Ascending aorta (tissue), 2 donors: ENCODE measurements at regions of chr11 and their contacts with region 1.

Region 1: DNA sequence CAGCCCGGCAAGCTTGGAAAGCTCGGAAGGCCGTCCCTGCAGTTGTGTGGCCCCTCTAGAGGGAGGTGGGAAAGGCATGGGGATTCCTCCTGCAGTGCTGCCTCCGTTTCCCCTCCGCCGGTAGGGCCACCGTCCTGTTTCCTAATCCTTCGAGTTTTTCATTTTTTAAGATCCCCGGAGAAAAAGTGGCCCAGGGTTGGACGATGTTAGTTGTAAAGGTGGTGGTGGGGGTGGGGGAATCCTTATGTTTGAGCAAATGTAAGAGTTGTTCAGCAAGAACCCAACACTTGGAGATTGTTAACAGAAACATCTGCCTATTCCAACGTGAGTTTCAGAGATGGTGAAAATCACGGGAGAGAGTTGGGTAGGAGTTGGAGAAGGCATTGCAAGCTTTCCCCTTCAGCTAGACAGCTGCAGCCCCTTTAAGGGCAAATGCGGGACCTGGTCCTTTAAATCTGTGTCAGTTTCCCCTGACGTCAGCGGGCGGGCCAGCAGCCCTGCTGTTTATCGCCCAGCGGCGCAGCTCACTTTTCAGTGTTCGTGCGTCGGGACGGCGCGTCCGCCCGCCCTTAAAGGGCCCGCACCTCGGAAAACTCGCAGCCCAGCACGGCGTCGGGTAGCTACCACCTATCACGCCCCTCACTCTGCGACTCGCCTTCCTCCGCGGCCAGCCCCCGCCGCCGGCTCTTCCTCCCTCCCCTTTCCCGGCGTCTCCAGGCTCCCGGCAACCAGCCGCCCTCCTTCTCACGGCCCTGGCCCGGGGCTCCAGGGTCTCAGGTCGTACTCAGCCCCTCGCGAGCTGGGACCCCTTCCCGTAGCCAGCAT is at the start of gene SIDT2:
- DNase-seq: peak; percentile 79 to 97
- H3K4me3 ChIP-seq: peak within 1 kb of the TSS; percentile 84 to 97
- H3K27ac ChIP-seq: peak within 1 kb of the TSS; percentile 98 to 99
- H3K4me1 ChIP-seq: peaks cover 14 to 28% of the 10 kb centered on the region in 2 donors
- H3K27me3 ChIP-seq: no peaks in the 10 kb centered on the region
- CTCF ChIP-seq: peak in 1 of 3 experiments; percentile 7
- total RNA-seq, gene SIDT2: 45.4 TPM

Region 2: GRCh38 chr11:116916052-116916451 is 262.4 kb before region 1 on chr11:
- intact Hi-C with region 1: no loop called
- DNase-seq: no peak
- H3K4me3 ChIP-seq: no peak overlapping the region
- H3K27ac ChIP-seq: no peak overlapping the region
- H3K4me1 ChIP-seq: peaks cover 0 to 5% of the 10 kb centered on the region in 2 donors
- H3K27me3 ChIP-seq: no peaks in the 10 kb centered on the region
- CTCF ChIP-seq: no peak

Region 3: GRCh38 chr11:117020287-117020686 is 158.1 kb before region 1 on chr11:
- intact Hi-C with region 1: no loop called
- DNase-seq: no peak
- H3K4me3 ChIP-seq: no peak overlapping the region
- H3K27ac ChIP-seq: no peak overlapping the region
- H3K4me1 ChIP-seq: no peaks in the 10 kb centered on the region
- H3K27me3 ChIP-seq: no peaks in the 10 kb centered on the region
- CTCF ChIP-seq: no peak

Region 4: GRCh38 chr11:117143871-117144476 is 34.4 kb before region 1 on chr11 and contains the start of gene PAFAH1B2:
- intact Hi-C with region 1: loop called (anchors 1 kb)
- DNase-seq: peak; percentile 81 to 97
- H3K4me3 ChIP-seq: peak within 1 kb of the TSS; percentile 92 to 98
- H3K27ac ChIP-seq: peak within 1 kb of the TSS; percentile 91 to 95
- H3K4me1 ChIP-seq: peaks cover 3 to 18% of the 10 kb centered on the region in 2 donors
- H3K27me3 ChIP-seq: no peaks in the 10 kb centered on the region
- CTCF ChIP-seq: no peak
- total RNA-seq, gene PAFAH1B2: 60.7 TPM

Region 5: DNA sequence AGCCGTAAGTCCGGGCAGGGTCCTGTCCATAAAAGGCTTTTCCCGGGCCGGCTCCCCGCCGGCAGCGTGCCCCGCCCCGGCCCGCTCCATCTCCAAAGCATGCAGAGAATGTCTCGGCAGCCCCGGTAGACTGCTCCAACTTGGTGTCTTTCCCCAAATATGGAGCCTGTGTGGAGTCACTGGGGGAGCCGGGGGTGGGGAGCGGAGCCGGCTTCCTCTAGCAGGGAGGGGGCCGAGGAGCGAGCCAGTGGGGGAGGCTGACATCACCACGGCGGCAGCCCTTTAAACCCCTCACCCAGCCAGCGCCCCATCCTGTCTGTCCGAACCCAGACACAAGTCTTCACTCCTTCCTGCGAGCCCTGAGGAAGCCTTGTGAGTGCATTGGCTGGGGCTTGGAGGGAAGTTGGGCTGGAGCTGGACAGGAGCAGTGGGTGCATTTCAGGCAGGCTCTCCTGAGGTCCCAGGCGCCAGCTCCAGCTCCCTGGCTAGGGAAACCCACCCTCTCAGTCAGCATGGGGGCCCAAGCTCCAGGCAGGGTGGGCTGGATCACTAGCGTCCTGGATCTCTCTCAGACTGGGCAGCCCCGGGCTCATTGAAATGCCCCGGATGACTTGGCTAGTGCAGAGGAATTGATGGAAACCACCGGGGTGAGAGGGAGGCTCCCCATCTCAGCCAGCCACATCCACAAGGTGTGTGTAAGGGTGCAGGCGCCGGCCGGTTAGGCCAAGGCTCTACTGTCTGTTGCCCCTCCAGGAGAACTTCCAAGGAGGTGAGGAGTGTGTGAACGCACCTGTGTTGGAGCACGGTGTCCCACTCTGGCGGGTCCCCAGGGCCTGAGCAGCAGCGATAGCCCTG is 20.9 kb after region 1 on chr11 and contains the start of gene TAGLN:
- intact Hi-C with region 1: loop called (anchors 1 kb)
- DNase-seq: peak; percentile 87 to 99
- H3K4me3 ChIP-seq: peak within 1 kb of the TSS; percentile 68 to 97
- H3K27ac ChIP-seq: peak within 1 kb of the TSS; percentile 96 to 98
- H3K4me1 ChIP-seq: peaks cover 7 to 9% of the 10 kb centered on the region in 2 donors
- H3K27me3 ChIP-seq: no peaks in the 10 kb centered on the region
- CTCF ChIP-seq: no peak
- total RNA-seq, gene TAGLN: 6,542 TPM

Region 6: GRCh38 chr11:117226388-117227385 is 48.3 kb after region 1 on chr11:
- intact Hi-C with region 1: loop called (anchors 1 kb)
- DNase-seq: peak in 1 of 2 donors; percentile 71
- H3K4me3 ChIP-seq: no peak overlapping the region
- H3K27ac ChIP-seq: peak overlapping the region in 1 of 2 donors; percentile 16
- H3K4me1 ChIP-seq: peaks cover 7 to 19% of the 10 kb centered on the region in 2 donors
- H3K27me3 ChIP-seq: no peaks in the 10 kb centered on the region
- CTCF ChIP-seq: peak; percentile 71 to 87 (median 83)

Region 7: DNA sequence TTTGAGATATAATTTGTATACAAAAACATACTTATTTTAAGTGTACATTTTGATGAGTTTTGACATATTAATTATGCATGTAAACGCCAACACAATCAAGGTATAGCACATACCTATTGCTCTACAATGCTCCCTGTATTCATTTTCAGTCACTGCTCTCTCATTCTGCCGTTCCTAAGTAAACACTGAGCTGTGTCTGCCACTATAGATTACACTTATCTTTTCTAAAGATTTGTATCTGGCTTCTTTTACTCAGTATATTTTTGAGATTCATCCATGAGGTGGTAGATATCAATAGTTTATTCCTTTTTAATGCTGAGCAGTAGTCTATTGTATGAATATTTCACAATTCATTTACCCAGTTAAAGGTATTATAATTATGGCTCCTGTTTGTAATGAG is 87.3 kb after region 1 on chr11:
- intact Hi-C with region 1: no loop called
- DNase-seq: no peak
- H3K4me3 ChIP-seq: no peak overlapping the region
- H3K27ac ChIP-seq: no peak overlapping the region
- H3K4me1 ChIP-seq: no peaks in the 10 kb centered on the region
- H3K27me3 ChIP-seq: no peaks in the 10 kb centered on the region
- CTCF ChIP-seq: no peak

Region 8: GRCh38 chr11:117316197-117316961 is 138.0 kb after region 1 on chr11 and contains the start of gene BACE1:
- intact Hi-C with region 1: loop called (anchors 10 kb)
- DNase-seq: peak in 1 of 2 donors; percentile 88
- H3K4me3 ChIP-seq: peak within 1 kb of the TSS; percentile 80 to 95
- H3K27ac ChIP-seq: peak within 1 kb of the TSS; percentile 44 to 51
- H3K4me1 ChIP-seq: peaks cover 6 to 15% of the 10 kb centered on the region in 2 donors
- H3K27me3 ChIP-seq: no peaks in the 10 kb centered on the region
- CTCF ChIP-seq: peak in 2 of 3 experiments; percentile 32 to 56
- total RNA-seq, gene BACE1: 27.2 TPM